SK-N-SH (cell line): ENCODE measurements at regions of chr3 and their contacts with region 1.

Region 1: DNA sequence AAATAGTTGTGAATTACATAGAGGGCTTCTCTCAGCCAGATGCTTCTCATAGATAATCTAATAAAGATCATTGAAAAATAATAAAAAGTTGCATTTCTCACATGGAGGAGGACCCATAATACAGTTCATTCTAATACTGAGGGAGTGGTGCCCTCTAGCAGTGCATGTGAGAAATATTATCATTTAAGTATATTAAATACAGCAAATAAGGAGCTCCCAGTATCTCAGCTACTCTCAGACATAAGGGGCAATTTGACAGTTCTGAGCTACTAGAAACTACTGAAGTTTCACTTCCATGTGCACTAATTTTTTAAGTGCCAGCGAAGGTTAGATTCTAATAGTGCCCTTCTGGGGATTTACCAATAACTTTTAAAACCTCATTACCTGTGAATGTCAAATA is 188.3 kb downstream of the IL5RA start:
- DNase-seq: peak; percentile 66
- H3K4me3 ChIP-seq: no peak overlapping the region; a peak in 1 of 4 replicates
- H3K27ac ChIP-seq: no peak overlapping the region
- H3K4me1 ChIP-seq: peaks cover 0 to 2% of the 10 kb centered on the region in 2 experiments; a peak in 1 of 4 replicates
- H3K27me3 ChIP-seq: no peaks in the 10 kb centered on the region
- CTCF ChIP-seq: peak; percentile 28; the same call in 1 of the 2 replicates
- EP300 ChIP-seq: no peak
- RAD21 ChIP-seq: peak; percentile 86

Region 2: GRCh38 chr3:1087066-1087560 is 1834.8 kb before region 1 on chr3:
- CTCF ChIA-PET with region 1: interaction called, 11 read pairs
- POLR2A ChIA-PET with region 1: no interaction called
- DNase-seq: no peak
- H3K4me3 ChIP-seq: no peak overlapping the region
- H3K27ac ChIP-seq: peak overlapping the region in 1 of 2 experiments; percentile 41; a peak in 3 of 4 replicates
- H3K4me1 ChIP-seq: no peaks in the 10 kb centered on the region; a peak in 2 of 4 replicates
- H3K27me3 ChIP-seq: no peaks in the 10 kb centered on the region
- CTCF ChIP-seq: peak; percentile 54
- EP300 ChIP-seq: no peak
- RAD21 ChIP-seq: peak; percentile 84

Region 3: DNA sequence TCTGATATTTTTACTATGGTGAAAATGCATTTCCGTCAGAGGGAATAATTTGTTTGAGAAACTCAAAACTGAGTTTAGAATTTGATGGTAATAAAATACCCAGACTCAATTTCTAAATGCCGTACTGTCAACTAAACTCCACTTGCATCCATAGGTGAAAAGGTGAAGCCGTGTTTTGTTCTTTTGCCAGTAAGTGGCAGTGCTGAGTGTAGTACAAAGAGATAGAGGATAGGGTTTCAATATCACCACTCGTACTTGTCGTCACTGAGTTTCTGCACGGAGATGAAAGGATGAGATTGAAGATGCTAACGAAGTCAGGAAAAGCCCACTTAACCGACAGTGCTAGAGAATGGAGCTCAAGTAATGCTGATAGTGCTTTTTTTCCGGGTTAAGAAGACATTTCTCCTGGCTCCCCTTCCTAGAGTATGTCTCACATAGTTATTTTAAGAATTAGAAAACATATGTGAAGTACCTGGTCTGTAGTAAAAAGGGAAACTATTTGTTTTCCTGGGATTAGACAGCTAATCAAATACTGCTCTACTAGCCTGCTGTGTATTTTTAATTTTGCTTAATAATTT is 156.8 kb before region 1 on chr3:
- CTCF ChIA-PET with region 1: interaction called, 39 read pairs
- POLR2A ChIA-PET with region 1: no interaction called
- DNase-seq: peak; percentile 53
- H3K4me3 ChIP-seq: no peak overlapping the region
- H3K27ac ChIP-seq: no peak overlapping the region; a peak in 1 of 4 replicates
- H3K4me1 ChIP-seq: peaks cover 0 to 2% of the 10 kb centered on the region in 2 experiments; a peak in 1 of 4 replicates
- H3K27me3 ChIP-seq: no peaks in the 10 kb centered on the region
- CTCF ChIP-seq: no peak
- EP300 ChIP-seq: no peak
- RAD21 ChIP-seq: peak; percentile 77

Region 4: DNA sequence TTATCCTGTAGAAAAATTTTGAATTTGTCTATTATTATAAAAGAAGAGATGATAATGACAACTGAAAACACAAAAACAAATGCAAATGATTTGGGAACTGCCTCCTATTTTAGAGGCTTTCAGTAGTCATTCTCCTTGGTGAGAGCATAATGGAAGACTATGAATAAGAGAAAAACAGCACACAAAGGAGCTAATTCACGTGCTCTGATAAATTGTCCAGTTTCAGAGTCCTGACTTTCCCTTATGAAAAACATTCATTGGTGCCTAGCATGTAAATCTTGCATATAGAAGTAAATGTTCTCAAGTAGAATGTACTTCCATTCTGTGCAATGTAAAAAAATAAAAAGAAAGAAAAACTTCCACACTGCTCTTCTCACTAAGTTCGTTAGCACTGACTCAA is 17.8 kb before region 1 on chr3:
- CTCF ChIA-PET with region 1: interaction called, 10 read pairs
- POLR2A ChIA-PET with region 1: no interaction called
- DNase-seq: no peak
- H3K4me3 ChIP-seq: no peak overlapping the region
- H3K27ac ChIP-seq: no peak overlapping the region
- H3K4me1 ChIP-seq: no peaks in the 10 kb centered on the region
- H3K27me3 ChIP-seq: no peaks in the 10 kb centered on the region
- CTCF ChIP-seq: no peak
- EP300 ChIP-seq: no peak
- RAD21 ChIP-seq: no peak

Region 5: GRCh38 chr3:2910997-2911396 is 10.9 kb before region 1 on chr3:
- CTCF ChIA-PET with region 1: interaction called, 13 read pairs
- POLR2A ChIA-PET with region 1: no interaction called
- DNase-seq: no peak
- H3K4me3 ChIP-seq: no peak overlapping the region
- H3K27ac ChIP-seq: no peak overlapping the region
- H3K4me1 ChIP-seq: no peaks in the 10 kb centered on the region
- H3K27me3 ChIP-seq: no peaks in the 10 kb centered on the region
- CTCF ChIP-seq: no peak
- EP300 ChIP-seq: no peak
- RAD21 ChIP-seq: no peak

Region 6: GRCh38 chr3:3015185-3016089 is 93.5 kb after region 1 on chr3:
- CTCF ChIA-PET with region 1: interaction called, 15 read pairs
- POLR2A ChIA-PET with region 1: no interaction called
- DNase-seq: peak; percentile 58
- H3K4me3 ChIP-seq: peak overlapping the region in 1 of 2 experiments; percentile 32; a peak in 1 of 4 replicates
- H3K27ac ChIP-seq: no peak overlapping the region
- H3K4me1 ChIP-seq: no peaks in the 10 kb centered on the region; a peak in 1 of 4 replicates
- H3K27me3 ChIP-seq: no peaks in the 10 kb centered on the region
- CTCF ChIP-seq: peak; percentile 39
- EP300 ChIP-seq: no peak
- RAD21 ChIP-seq: peak; percentile 98